Transverse colon (tissue), 4 donors: ENCODE measurements at regions of chr6 and their contacts with region 1.

Region 1: DNA sequence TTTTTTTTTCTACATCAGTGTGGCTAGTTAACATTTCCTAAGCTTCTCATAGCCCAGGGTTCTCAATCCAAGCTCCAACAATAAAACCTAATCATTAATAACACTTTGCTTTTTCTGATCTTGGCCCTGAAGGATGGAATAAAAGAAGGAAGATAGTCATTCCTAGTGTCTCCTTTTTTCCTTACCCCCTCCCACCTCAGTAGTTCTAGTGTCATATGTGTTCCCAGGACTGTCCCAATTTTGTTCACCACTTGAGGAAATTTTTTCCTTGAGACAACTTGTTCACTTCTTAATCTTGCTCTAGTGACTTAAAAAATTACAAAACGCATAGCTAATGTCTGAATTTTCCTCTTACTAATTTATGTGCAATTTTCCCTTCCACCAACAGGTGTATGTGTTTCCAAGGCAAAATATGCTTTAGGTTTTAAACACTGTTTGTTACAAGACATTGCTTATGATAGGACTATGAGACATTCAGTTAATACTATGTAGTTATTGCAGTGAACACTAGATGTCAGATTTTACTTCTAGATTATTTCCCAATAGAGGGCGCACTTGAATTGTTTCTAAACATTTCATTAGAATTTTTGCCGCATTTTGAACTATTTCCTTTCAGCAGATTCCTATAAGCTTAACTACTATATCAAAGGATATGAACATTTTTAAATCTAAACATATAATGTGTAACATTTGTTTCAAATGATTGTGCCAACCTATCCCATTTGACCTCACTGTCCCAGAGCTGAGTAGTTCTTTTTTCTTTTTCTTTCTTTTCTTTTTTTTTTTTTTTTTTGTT is 18.5 kb upstream of the C6orf141 start:
- DNase-seq: no peak
- H3K4me3 ChIP-seq: no peak overlapping the region
- H3K27ac ChIP-seq: no peak overlapping the region
- H3K4me1 ChIP-seq: peaks cover 0 to 4% (median 2%) of the 10 kb centered on the region in 4 donors
- H3K27me3 ChIP-seq: no peaks in the 10 kb centered on the region
- CTCF ChIP-seq: peak; percentile 61 to 87 (median 71)
- EP300 ChIP-seq: no peak
- POLR2A ChIP-seq: no peak

Region 2: DNA sequence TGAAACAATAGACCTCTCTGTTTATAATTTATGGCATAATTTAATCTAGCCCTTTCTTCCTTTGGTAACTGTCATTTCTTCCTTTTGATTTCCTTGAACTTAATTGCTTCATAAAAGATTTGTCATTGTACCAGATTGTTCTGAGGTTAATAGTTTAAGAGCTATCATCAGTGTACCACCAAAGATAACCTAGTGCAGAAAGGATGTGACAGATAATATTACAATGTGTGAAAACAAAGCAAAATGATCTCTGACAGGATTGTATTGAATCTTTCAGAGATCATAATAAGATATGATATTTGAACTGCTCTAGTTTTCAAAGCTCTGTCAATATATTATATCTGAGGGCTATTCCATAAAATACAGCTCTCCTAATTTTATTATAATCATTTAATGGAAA is 1288.9 kb before region 1 on chr6:
- in situ Hi-C with region 1: no loop called
- intact Hi-C with region 1: no loop called
- DNase-seq: no peak
- H3K4me3 ChIP-seq: no peak overlapping the region
- H3K27ac ChIP-seq: no peak overlapping the region
- H3K4me1 ChIP-seq: no peaks in the 10 kb centered on the region
- H3K27me3 ChIP-seq: no peaks in the 10 kb centered on the region
- CTCF ChIP-seq: no peak
- EP300 ChIP-seq: no peak
- POLR2A ChIP-seq: no peak

Region 3: DNA sequence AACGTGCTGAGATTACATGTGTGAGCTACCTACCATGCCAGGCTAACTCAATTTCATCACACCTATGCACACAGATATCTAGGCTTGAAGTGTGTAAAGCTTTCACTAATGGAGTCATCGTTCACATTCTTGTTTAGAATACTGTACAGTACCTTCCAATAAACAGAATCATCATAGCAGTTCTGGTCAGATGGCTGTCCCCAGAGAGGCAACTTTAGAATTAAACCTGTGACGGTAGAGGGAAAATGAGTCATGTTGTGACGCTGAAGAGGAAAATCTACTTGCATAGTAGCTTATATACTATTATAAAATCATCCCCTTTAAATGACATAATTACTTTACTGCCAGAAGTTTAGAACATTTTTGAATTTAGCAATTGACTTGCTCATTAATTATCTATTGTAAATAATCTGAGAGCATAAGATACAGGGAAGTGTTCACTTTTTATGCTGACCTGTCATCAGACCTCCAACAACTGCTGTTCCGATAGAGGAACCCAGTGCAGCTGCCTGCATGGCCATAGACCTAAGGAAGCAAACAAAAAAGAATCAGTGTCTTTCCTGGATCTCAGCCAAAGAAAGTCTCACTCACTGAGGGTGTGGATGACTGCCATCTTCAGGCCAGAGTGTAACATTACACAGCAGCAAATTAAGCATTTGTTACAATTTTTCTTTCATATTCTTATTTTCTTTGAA is 74.9 kb after region 1 on chr6:
- in situ Hi-C with region 1: loop called in 2 of 4 experiments (anchors 5 to 10 kb)
- intact Hi-C with region 1: no loop called
- DNase-seq: peak; percentile 23
- H3K4me3 ChIP-seq: no peak overlapping the region
- H3K27ac ChIP-seq: no peak overlapping the region
- H3K4me1 ChIP-seq: peaks cover 0 to 5% (median 0%) of the 10 kb centered on the region in 4 donors
- H3K27me3 ChIP-seq: peaks cover 3% of the 10 kb centered on the region
- CTCF ChIP-seq: peak; percentile 77 to 88 (median 84)
- EP300 ChIP-seq: no peak
- POLR2A ChIP-seq: no peak

Region 4: GRCh38 chr6:49618257-49618656 is 86.3 kb after region 1 on chr6:
- in situ Hi-C with region 1: loop called in 1 of 4 experiments (anchors 10 kb)
- intact Hi-C with region 1: no loop called
- DNase-seq: no peak
- H3K4me3 ChIP-seq: no peak overlapping the region
- H3K27ac ChIP-seq: no peak overlapping the region
- H3K4me1 ChIP-seq: no peaks in the 10 kb centered on the region
- H3K27me3 ChIP-seq: no peaks in the 10 kb centered on the region
- CTCF ChIP-seq: no peak
- EP300 ChIP-seq: no peak
- POLR2A ChIP-seq: no peak

Region 5: GRCh38 chr6:49849213-49849907 is 317.4 kb after region 1 on chr6:
- in situ Hi-C with region 1: loop called in 3 of 4 experiments (anchors 25 kb)
- intact Hi-C with region 1: loop called (anchors 10 kb)
- DNase-seq: no peak
- H3K4me3 ChIP-seq: no peak overlapping the region
- H3K27ac ChIP-seq: no peak overlapping the region
- H3K4me1 ChIP-seq: no peaks in the 10 kb centered on the region
- H3K27me3 ChIP-seq: no peaks in the 10 kb centered on the region
- CTCF ChIP-seq: peak; percentile 57 to 64 (median 60)
- EP300 ChIP-seq: no peak
- POLR2A ChIP-seq: no peak